ENCODE measurements at regions of chr12 and their contacts with region 1.

Region 1: DNA sequence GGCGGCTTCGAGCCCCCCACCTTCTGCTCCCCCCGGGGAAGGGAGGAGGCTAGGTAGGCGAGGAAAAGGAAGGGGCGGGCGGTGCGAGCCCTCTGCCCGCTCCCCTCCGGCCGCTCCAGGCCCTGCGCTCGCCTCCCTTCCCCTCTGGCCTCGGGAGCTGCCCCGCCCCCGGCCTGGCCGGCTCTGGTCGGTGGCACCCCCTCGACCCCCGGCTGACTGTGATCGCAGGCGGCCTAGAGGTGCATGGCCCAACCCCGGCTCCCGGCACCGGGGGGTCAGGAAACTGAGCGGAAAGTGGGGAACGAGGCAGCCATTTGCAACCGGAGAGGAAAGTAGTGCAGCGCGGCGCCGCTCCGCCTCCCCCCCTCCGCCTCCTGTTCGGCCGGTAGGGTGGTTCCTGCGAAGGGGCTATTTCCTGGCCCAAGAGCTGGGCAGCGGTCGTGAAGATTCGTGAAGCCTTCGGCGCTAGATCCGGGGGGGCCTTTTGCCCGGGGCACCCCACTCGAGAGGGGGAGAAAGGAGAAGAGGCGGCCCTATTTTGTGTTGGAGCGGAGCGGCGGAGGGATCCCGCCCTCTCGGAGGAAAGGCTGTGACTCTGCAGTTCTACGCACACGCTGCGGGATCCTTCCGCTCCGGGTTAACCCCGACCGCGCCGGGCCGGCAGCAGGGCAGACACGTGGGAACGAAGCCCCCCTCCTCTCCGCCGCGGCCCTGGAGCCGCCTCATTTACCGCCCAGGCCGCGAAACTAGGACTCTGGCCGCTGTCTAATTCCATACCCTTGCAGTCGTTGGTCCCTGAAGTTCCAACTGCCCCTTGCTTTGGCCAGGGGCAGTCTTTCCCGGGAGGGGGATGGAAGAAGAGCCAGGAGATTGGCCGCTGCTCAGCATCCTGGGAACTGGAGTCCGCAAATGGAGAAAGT is at the start of gene KMT2D:
- DNase-seq: peak; percentile 96
- ATAC-seq: peak; percentile 74
- H3K4me3 ChIP-seq: peak within 1 kb of the TSS; percentile 81
- H3K27ac ChIP-seq: peak within 1 kb of the TSS; percentile 98
- H3K4me1 ChIP-seq: peaks cover 7% of the 10 kb centered on the region
- H3K27me3 ChIP-seq: no peaks in the 10 kb centered on the region
- CTCF ChIP-seq: 0 out of 2 replicates have a peak, but pooled peaks have one; percentile 1
- POLR2A ChIP-seq: peak; percentile 48; the same call in 1 of the 2 replicates
- RAD21 ChIP-seq: no peak
- total RNA-seq, gene KMT2D: 6.6 and 10.0 TPM in 2 replicates

Region 2: DNA sequence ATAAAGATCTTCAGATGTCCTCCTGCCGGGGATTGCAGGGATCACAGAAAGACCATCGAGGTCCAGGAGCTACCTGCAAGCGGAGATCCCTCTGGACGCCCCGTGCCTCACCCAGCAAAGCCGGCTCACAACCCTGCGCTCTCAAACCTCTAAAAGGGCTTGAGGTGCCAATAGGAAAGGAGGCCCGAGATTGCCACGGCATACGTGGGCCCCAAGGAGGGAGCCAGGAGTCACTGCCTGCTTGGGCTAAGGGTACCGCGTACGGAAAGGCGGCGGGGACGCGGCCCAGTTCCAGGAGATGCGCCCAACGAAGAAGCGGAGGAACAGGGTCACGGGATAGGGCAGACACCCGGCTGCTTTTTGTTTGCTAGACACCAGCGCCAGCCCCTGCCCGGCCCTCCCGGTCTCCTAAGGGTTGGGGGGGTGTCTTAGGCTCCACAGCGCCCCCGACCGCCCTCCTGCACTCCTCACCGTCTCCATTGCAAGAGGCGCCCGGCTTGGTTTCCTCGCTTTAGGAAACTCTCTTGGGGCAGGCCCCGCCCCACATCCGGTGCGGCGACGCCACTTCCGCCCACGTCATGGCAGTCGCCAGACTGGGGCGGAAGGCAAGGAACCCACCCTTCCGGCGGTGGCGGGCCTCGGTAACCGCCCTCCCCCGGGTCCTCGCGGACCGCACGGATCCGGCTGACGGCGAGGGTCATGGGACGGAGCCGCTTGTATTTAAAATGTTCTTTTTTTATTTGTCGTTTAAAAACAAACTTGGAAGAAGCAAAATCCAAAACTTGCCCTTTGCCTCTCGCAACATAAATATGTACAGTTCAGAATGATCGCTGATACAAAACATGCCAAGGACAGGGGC is 42.0 kb before region 1 on chr12 and contains the start of gene PRKAG1:
- CTCF ChIA-PET with region 1: no interaction called
- POLR2A ChIA-PET with region 1: no interaction called
- dilution Hi-C with region 1: no loop called
- in situ Hi-C with region 1: no loop called
- intact Hi-C with region 1: no loop called
- DNase-seq: peak; percentile 97
- ATAC-seq: peak; percentile 86
- H3K4me3 ChIP-seq: peak within 1 kb of the TSS; percentile 71
- H3K27ac ChIP-seq: peak within 1 kb of the TSS; percentile 92
- H3K4me1 ChIP-seq: peaks cover 3% of the 10 kb centered on the region
- H3K27me3 ChIP-seq: no peaks in the 10 kb centered on the region
- CTCF ChIP-seq: peak; percentile 71
- POLR2A ChIP-seq: peak; percentile 97
- RAD21 ChIP-seq: 0 out of 2 replicates have a peak, but pooled peaks have one; percentile 16
- total RNA-seq, gene PRKAG1: 76.4 and 106 TPM in 2 replicates

Region 3: GRCh38 chr12:49121047-49121696 is 60.7 kb after region 1 on chr12:
- CTCF ChIA-PET with region 1: interaction called, 3 read pairs
- POLR2A ChIA-PET with region 1: no interaction called
- dilution Hi-C with region 1: no loop called
- in situ Hi-C with region 1: no loop called
- intact Hi-C with region 1: loop called (anchors 1 kb)
- DNase-seq: peak; percentile 71
- ATAC-seq: peak; percentile 97
- H3K4me3 ChIP-seq: no peak overlapping the region
- H3K27ac ChIP-seq: no peak overlapping the region
- H3K4me1 ChIP-seq: 0 out of 2 replicates have a peak, but pooled peaks cover 1% of the 10 kb centered on the region
- H3K27me3 ChIP-seq: no peaks in the 10 kb centered on the region
- CTCF ChIP-seq: peak; percentile 71
- POLR2A ChIP-seq: no peak
- RAD21 ChIP-seq: peak; percentile 71

Region 4: GRCh38 chr12:49232940-49233841 is 172.7 kb after region 1 on chr12:
- CTCF ChIA-PET with region 1: no interaction called
- POLR2A ChIA-PET with region 1: no interaction called
- dilution Hi-C with region 1: no loop called
- in situ Hi-C with region 1: loop called (anchors 5 kb)
- intact Hi-C with region 1: loop called (anchors 1 kb)
- DNase-seq: peak; percentile 56
- ATAC-seq: peak; percentile 68
- H3K4me3 ChIP-seq: peak overlapping the region; percentile 25
- H3K27ac ChIP-seq: peak overlapping the region; percentile 88
- H3K4me1 ChIP-seq: peaks cover 16% of the 10 kb centered on the region
- H3K27me3 ChIP-seq: no peaks in the 10 kb centered on the region
- CTCF ChIP-seq: peak; percentile 29; the same call in 1 of the 2 replicates
- POLR2A ChIP-seq: no peak
- RAD21 ChIP-seq: peak; percentile 25; the same call in 1 of the 2 replicates